Right ventricle myocardium superior (tissue), 1 donor: ENCODE measurements at regions of chr15 and their contacts with region 1.

Region 1: GRCh38 chr15:50641288-50641687 is 45.3 kb downstream of the TRPM7 start:
- DNase-seq: no peak
- ATAC-seq: no peak

Region 2: GRCh38 chr15:50590288-50590687 is 51.0 kb before region 1 on chr15:
- intact Hi-C with region 1: loop called (anchors 5 kb)
- DNase-seq: no peak
- ATAC-seq: no peak